Activated T-helper 1 cell treated with anti-CD3 and anti-CD28 coated beads, Interleukin-12 subunit alpha, Interleukin-12 subunit beta, Interleukin-2, Interleukin-4 antibody, amounts not matched to agents 30 ng/mL and 10 ng/mL and 1 ng/mL, durations not matched to agents 14 hours and 24 hours and 36 hours (primary cell): ENCODE measurements at regions of chr5 and their contacts with region 1.

Region 1: GRCh38 chr5:146273109-146273508 is 65.5 kb upstream of the POU4F3 start:
- DNase-seq: no peak
- H3K4me3 Mint-ChIP-seq: no peak overlapping the region
- H3K27ac Mint-ChIP-seq: no peak overlapping the region
- H3K4me1 Mint-ChIP-seq: no peaks in the 10 kb centered on the region
- H3K27me3 Mint-ChIP-seq: no peaks in the 10 kb centered on the region

Region 2: DNA sequence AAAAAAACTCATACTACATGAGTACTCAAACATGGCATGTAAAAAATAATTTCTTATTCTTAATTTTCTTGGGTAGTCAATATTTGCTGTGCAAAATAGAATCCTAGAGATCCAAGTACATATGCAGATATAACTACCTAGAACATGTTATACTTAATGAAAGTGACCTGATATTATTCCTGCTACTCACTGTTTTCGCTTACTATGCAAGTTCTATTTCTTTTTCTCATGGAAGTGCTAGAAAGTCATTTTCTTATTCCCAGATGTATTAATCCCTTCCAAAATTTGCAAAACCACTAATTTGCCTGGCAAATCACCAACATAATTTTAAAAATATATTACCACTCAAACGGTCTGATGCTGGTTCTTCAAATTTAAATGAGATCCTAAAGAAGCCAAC is 148.5 kb before region 1 on chr5:
- intact Hi-C with region 1: loop called (anchors 5 kb)
- DNase-seq: no peak
- H3K4me3 Mint-ChIP-seq: no peak overlapping the region
- H3K27ac Mint-ChIP-seq: no peak overlapping the region
- H3K4me1 Mint-ChIP-seq: peaks cover 7% of the 10 kb centered on the region
- H3K27me3 Mint-ChIP-seq: no peaks in the 10 kb centered on the region

Region 3: GRCh38 chr5:146165460-146165859 is 107.6 kb before region 1 on chr5:
- intact Hi-C with region 1: loop called (anchors 10 kb)
- DNase-seq: no peak
- H3K4me3 Mint-ChIP-seq: no peak overlapping the region
- H3K27ac Mint-ChIP-seq: no peak overlapping the region
- H3K4me1 Mint-ChIP-seq: peaks cover 4% of the 10 kb centered on the region
- H3K27me3 Mint-ChIP-seq: no peaks in the 10 kb centered on the region

Region 4: GRCh38 chr5:146179696-146180095 is 93.4 kb before region 1 on chr5:
- intact Hi-C with region 1: loop called (anchors 5 kb)
- DNase-seq: no peak
- H3K4me3 Mint-ChIP-seq: peak overlapping the region; percentile 99
- H3K27ac Mint-ChIP-seq: no peak overlapping the region
- H3K4me1 Mint-ChIP-seq: peaks cover 12% of the 10 kb centered on the region
- H3K27me3 Mint-ChIP-seq: no peaks in the 10 kb centered on the region

Region 5: DNA sequence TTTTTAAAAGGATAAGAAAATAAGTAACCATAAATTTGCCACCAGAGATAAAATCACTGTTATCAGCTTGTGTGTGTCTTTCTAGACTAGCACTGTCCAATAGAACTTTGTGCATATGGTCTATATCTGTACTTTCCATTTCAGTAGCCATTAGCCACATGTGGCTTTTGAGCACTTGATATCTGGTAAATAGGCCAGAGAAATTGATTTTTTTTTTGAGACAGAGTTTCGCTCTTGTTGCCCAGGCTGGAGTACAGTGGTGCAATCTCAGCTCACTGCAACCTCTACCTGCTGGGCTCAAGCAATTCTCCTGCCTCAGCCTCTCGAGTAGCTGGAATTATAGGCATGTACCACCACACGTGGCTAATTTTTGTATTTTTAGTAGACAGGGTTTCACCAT is 51.9 kb before region 1 on chr5:
- intact Hi-C with region 1: loop called (anchors 5 kb)
- DNase-seq: no peak
- H3K4me3 Mint-ChIP-seq: no peak overlapping the region
- H3K27ac Mint-ChIP-seq: no peak overlapping the region
- H3K4me1 Mint-ChIP-seq: peaks cover 5% of the 10 kb centered on the region
- H3K27me3 Mint-ChIP-seq: no peaks in the 10 kb centered on the region

Region 6: GRCh38 chr5:146466521-146467349 is 193.6 kb after region 1 on chr5:
- intact Hi-C with region 1: loop called (anchors 10 kb)
- DNase-seq: no peak
- H3K4me3 Mint-ChIP-seq: no peak overlapping the region
- H3K27ac Mint-ChIP-seq: no peak overlapping the region
- H3K4me1 Mint-ChIP-seq: peaks cover 24% of the 10 kb centered on the region
- H3K27me3 Mint-ChIP-seq: no peaks in the 10 kb centered on the region